ENCODE measurements at regions of chr1 and their contacts with region 1.

Region 1: DNA sequence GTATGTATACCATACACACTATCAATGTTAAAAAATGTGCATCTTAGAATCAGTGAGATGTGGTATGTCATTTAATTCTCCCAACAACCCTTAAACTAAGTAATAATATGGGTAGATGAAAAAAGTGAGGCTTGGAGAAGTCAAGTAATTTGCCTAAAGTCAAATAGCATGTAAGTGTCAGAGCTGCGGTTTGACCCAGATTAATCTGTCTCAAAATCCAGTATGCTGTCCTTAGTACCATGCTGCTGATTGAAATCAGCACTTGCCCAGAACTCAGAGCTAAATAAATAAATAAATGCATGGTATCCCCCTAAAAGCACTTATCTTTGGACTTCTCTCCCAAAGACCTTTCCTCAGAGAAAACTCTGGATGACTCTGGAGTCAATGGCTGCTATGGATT is 16.7 kb downstream of the BCL9 start:
- DNase-seq: no peak
- ATAC-seq: no peak
- H3K4me3 ChIP-seq: no peak overlapping the region
- H3K27ac ChIP-seq: no peak overlapping the region
- H3K4me1 ChIP-seq: peaks cover 0 to 10% (median 0%) of the 10 kb centered on the region in 9 donors
- H3K27me3 ChIP-seq: no peaks in the 10 kb centered on the region
- CTCF ChIP-seq: no peak

Region 2: DNA sequence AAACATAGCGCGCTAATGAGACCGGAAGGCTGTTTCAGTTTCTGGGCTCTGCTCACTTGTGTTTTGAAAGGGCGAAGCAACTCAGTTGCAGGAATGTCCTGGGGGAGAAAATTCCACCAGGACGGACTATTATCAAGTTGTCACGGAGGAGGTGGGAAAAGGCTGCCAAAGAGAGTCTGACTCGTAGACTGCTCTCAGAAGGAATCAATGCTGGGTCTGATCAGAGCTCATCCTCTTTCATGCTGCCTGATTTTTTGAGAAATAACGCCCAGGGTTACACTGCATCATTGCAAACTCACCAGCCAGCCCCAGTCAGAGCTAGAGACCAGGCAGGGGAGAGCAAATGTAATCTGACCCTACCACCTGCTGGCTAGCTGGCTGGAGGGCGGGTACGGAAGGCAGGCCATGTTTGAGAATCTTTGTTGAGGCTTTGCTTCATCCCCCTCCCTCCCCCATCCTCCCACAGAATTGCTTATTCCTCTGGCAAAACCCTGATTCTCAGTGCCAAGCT is 53.2 kb before region 1 on chr1:
- intact Hi-C with region 1: no loop called
- DNase-seq: peak in 1 of 2 donors; percentile 29
- ATAC-seq: peak; percentile 25 to 80 (median 66)
- H3K4me3 ChIP-seq: peak overlapping the region in 5 of 10 donors; percentile 4 to 26 (median 8)
- H3K27ac ChIP-seq: peak overlapping the region in 6 of 10 donors; percentile 54 to 70 (median 66)
- H3K4me1 ChIP-seq: peaks cover 0 to 24% (median 6%) of the 10 kb centered on the region in 9 donors
- H3K27me3 ChIP-seq: no peaks in the 10 kb centered on the region
- CTCF ChIP-seq: no peak

Region 3: GRCh38 chr1:147515046-147515869 is 42.8 kb before region 1 on chr1:
- intact Hi-C with region 1: loop called in 1 of 10 experiments (anchors 1 kb)
- DNase-seq: no peak
- ATAC-seq: peak in 7 of 8 donors; percentile 63 to 86 (median 78)
- H3K4me3 ChIP-seq: no peak overlapping the region
- H3K27ac ChIP-seq: peak overlapping the region in 8 of 10 donors; percentile 37 to 84 (median 61)
- H3K4me1 ChIP-seq: peaks cover 3 to 45% (median 27%) of the 10 kb centered on the region in 9 donors
- H3K27me3 ChIP-seq: no peaks in the 10 kb centered on the region
- CTCF ChIP-seq: peak in 6 of 9 donors; percentile 23 to 56 (median 44)

Region 4: GRCh38 chr1:147676290-147677053 is 118.4 kb after region 1 on chr1:
- intact Hi-C with region 1: no loop called
- DNase-seq: no peak
- ATAC-seq: no peak
- H3K4me3 ChIP-seq: no peak overlapping the region
- H3K27ac ChIP-seq: no peak overlapping the region
- H3K4me1 ChIP-seq: peaks cover 0 to 3% (median 0%) of the 10 kb centered on the region in 9 donors
- H3K27me3 ChIP-seq: no peaks in the 10 kb centered on the region
- CTCF ChIP-seq: no peak